Activated CD4-positive, alpha-beta memory T cell treated with anti-CD3 and anti-CD28 coated beads, Interleukin-2, amount 10 ng/mL, durations not matched to agents 7 days and 5 days (primary cell): ENCODE measurements at regions of chr3 and their contacts with region 1.

Region 1: GRCh38 chr3:48465531-48466378 is 19.2 kb downstream of the ATRIP start:
- DNase-seq: peak; percentile 87
- H3K4me3 Mint-ChIP-seq: peak overlapping the region; percentile 95
- H3K27ac Mint-ChIP-seq: peak overlapping the region; percentile 94
- H3K4me1 Mint-ChIP-seq: peaks cover 56% of the 10 kb centered on the region
- H3K27me3 Mint-ChIP-seq: no peaks in the 10 kb centered on the region

Region 2: DNA sequence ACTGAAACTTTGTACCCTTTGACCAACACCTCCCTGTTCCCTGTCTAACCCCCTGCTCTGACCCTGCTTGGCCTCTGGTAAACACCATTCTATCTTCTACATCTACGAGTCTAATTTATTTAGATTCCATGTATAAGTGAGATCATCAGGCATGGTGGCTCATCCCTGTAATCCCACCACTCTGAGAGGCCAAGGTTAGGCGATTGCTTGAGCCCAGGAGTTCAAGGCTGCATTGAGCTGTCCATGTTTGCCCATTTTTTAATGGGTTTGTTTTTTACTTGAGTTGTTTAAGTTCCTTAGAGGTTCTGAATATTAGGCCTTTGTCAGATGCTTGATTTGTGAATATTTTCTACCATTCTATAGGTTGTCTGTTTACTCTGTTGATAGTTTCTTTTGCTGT is 76.8 kb before region 1 on chr3:
- CTCF ChIA-PET with region 1: no interaction called
- POLR2A ChIA-PET with region 1: no interaction called
- DNase-seq: no peak
- H3K4me3 Mint-ChIP-seq: no peak overlapping the region
- H3K27ac Mint-ChIP-seq: no peak overlapping the region
- H3K4me1 Mint-ChIP-seq: no peaks in the 10 kb centered on the region
- H3K27me3 Mint-ChIP-seq: peaks cover 43% of the 10 kb centered on the region

Region 3: GRCh38 chr3:48446425-48447193 is 19.1 kb before region 1 on chr3 and contains the start of gene ATRIP:
- CTCF ChIA-PET with region 1: interaction called, 3 read pairs
- POLR2A ChIA-PET with region 1: interaction called, 69 read pairs
- DNase-seq: peak; percentile 90
- H3K4me3 Mint-ChIP-seq: peak within 1 kb of the TSS; percentile 90
- H3K27ac Mint-ChIP-seq: peak within 1 kb of the TSS; percentile 88
- H3K4me1 Mint-ChIP-seq: peaks cover 53% of the 10 kb centered on the region
- H3K27me3 Mint-ChIP-seq: no peaks in the 10 kb centered on the region
- total RNA-seq, gene ATRIP: 13.4 to 15.2 TPM

Region 4: DNA sequence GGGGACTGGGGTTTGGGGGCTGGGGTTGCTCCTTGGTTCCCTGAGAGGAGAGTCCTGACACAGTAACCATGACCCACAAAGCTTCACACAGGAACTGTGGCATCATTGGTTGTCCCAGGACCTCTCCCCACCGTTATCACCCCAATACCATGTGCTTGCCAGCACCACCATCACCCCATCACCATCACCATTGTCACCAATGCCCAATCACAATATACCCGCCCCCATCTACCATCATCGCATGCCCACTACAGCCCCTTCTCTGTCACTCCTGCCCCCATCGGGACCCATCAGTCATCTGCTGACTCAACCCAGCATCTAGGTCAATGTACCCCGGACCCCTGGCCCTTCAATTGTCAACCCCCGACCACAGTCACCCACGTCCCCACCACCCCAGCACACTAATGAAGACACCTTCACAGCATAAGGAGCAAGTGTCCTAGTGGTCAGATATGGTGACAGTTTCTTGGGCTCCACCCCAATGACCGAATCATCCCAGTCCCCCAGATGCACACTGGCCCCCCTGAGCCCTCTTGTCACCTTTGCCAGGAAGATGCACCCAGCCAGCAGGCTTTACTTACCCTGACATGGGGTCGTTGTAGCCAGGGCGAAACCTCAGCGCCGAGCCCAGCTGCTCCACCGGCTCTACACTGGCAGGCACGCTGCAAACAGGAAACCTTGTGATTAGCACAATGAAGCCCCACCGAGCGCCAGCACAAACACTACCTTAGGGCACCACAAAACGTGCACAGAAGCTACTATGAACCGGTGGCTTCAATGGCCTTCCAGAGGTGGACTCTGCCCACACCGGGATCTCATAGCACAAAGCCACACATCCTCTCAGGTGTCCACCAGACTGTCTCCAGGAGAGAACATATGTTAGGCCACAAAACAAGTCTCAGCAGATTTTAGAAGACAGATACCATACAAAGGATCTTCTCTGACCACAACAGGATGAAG is 13.1 kb after region 1 on chr3:
- CTCF ChIA-PET with region 1: no interaction called
- POLR2A ChIA-PET with region 1: interaction called, 57 read pairs
- DNase-seq: peak; percentile 75
- H3K4me3 Mint-ChIP-seq: peak overlapping the region; percentile 86
- H3K27ac Mint-ChIP-seq: peak overlapping the region; percentile 98
- H3K4me1 Mint-ChIP-seq: peaks cover 51% of the 10 kb centered on the region
- H3K27me3 Mint-ChIP-seq: no peaks in the 10 kb centered on the region

Region 5: DNA sequence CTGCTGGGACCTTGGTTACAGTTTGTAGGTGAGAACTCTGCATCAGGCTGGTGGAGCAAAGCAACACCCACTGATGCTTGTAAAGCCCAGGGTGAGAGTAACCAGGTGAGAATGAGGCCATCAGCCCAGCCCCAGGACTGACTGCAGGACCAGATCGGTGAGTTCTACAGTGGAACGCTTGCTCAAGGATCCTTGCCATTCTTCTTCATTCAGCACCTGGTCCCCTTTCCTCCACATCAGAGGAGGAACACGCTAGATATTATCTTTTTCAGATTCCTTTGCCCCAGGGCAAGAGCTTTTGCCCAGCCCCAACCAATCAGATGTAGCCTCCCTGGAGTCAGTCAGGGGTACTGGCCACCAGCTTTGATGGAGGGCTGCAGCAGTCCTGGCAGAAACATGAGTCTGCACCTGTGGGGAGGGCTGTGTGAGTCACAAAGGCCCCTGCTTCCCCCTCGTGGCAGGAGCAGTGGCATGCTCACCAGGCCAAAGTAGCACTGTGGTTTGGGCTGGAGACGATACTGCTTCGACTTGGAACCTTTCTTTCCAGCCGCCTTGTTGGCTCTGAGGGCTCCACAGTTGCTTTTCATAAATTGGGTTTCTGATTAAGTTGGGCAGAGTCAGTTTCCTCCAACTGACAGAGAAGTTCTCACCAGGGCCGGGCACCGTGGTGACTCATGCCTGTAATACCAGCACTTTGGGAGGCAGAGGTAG is 41.8 kb after region 1 on chr3:
- CTCF ChIA-PET with region 1: interaction called, 6 read pairs
- POLR2A ChIA-PET with region 1: interaction called, 18 read pairs
- DNase-seq: peak; percentile 82
- H3K4me3 Mint-ChIP-seq: no peak overlapping the region
- H3K27ac Mint-ChIP-seq: peak overlapping the region; percentile 83
- H3K4me1 Mint-ChIP-seq: peaks cover 56% of the 10 kb centered on the region
- H3K27me3 Mint-ChIP-seq: peaks cover 16% of the 10 kb centered on the region

Region 6: DNA sequence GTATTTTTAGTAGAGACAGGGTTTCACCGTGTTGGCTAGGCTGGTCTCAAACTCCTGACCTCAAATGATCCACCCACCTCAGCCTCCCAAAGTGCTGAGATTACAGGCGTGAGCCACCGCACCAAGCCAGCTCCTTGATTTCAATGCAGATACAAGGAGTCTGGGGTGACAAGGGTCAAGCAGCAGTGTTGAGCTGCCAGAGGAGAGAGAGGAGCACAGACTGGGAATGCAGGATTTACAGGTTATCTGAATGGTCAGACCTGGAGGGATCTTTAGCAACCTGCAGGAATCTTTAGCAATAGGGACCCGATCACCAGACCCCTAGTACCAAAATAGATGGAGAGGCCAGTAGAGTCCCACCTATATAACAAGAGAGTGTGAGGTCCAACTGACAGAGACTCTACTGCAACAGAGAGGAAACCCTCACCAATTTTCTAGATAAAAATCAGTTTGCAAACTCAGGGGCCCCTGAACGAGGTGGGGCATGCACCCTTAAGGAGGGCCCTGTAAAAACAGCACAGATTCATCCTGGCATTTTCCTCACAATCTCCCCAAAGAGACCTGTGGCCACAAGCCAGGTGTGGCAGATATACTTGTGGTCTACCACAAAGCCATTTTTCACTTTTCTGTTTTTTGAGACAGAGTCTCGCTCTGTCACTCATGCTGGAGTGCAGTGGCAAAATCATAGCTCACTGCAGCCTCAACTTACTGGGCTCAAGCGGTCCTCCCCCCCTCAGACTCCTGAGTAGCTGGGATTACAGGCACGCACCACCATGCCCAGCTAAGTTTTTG is 48.9 kb after region 1 on chr3:
- CTCF ChIA-PET with region 1: interaction called, 5 read pairs
- POLR2A ChIA-PET with region 1: interaction called, 16 read pairs
- DNase-seq: peak; percentile 74
- H3K4me3 Mint-ChIP-seq: peak overlapping the region; percentile 32
- H3K27ac Mint-ChIP-seq: peak overlapping the region; percentile 72
- H3K4me1 Mint-ChIP-seq: peaks cover 69% of the 10 kb centered on the region
- H3K27me3 Mint-ChIP-seq: peaks cover 16% of the 10 kb centered on the region

Region 7: GRCh38 chr3:48548729-48549705 is 83.3 kb after region 1 on chr3:
- CTCF ChIA-PET with region 1: interaction called, 19 read pairs
- POLR2A ChIA-PET with region 1: interaction called, 12 read pairs
- DNase-seq: peak; percentile 87
- H3K4me3 Mint-ChIP-seq: no peak overlapping the region
- H3K27ac Mint-ChIP-seq: no peak overlapping the region
- H3K4me1 Mint-ChIP-seq: peaks cover 8% of the 10 kb centered on the region
- H3K27me3 Mint-ChIP-seq: no peaks in the 10 kb centered on the region

Region 8: GRCh38 chr3:48556793-48557626 is 91.3 kb after region 1 on chr3 and contains the start of gene PFKFB4:
- CTCF ChIA-PET with region 1: interaction called, 6 read pairs
- POLR2A ChIA-PET with region 1: interaction called, 25 read pairs
- DNase-seq: peak; percentile 100
- H3K4me3 Mint-ChIP-seq: peak within 1 kb of the TSS; percentile 79
- H3K27ac Mint-ChIP-seq: peak within 1 kb of the TSS; percentile 74
- H3K4me1 Mint-ChIP-seq: peaks cover 49% of the 10 kb centered on the region
- H3K27me3 Mint-ChIP-seq: no peaks in the 10 kb centered on the region
- total RNA-seq, gene PFKFB4: 33.3 to 34.4 TPM